Left colon (tissue), 2 donors: ENCODE measurements at regions of chr14 and their contacts with region 1.

Region 1: DNA sequence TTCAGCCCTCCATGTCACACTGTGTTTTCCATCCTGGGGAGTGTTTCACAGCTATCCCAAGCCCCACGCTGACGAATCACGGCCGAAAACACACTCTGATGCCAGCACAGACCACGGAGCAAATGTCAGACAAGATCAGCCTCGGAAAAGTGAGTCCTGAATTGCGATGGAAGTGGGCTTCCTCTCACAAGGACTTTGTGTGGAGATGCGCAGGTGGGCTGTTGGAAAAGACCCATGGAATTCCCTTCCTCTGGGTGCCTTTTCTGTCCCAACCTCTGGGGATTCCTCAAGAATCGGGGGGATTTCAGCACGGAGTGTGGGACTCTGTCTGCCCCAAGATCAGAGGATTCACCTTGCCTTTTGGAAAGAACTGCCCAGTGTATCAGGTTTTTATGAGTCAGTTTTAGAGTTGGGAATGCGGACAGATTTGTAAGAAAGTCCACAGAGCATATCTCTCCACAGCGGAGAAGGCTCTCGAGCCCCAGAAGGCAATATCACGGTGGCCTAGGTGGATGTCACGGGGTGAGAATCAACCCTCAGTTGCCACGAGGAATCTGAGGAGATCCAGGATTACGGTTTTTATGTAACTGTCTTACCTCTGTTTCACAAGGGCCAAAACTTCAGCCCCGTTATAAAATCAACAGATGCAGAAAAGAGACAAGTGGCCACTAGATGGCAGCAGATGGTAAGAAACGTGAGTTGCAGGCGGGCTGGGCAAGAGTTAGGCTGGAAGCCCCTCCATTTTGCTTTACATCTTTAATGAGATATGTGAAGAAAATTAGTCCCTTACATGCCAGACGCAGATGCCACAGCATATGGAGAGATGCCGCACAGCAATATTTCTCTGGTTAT is 201.9 kb downstream of the DAD1 start:
- DNase-seq: peak; percentile 41 to 82
- ATAC-seq: no peak

Region 2: GRCh38 chr14:22333422-22334276 is 53.5 kb before region 1 on chr14:
- intact Hi-C with region 1: no loop called
- DNase-seq: no peak
- ATAC-seq: peak; percentile 88

Region 3: GRCh38 chr14:22472935-22473854 is 86.0 kb after region 1 on chr14:
- intact Hi-C with region 1: loop called (anchors 2 to 5 kb)
- DNase-seq: peak in 1 of 2 donors; percentile 47
- ATAC-seq: peak; percentile 64

Region 4: GRCh38 chr14:22556990-22557623 is 170.0 kb after region 1 on chr14:
- intact Hi-C with region 1: loop called in 1 of 2 experiments (anchors 10 kb)
- DNase-seq: peak; percentile 85 to 93
- ATAC-seq: peak; percentile 72